Colonic mucosa (tissue), 4 donors: ENCODE measurements at regions of chr20 and their contacts with region 1.

Region 1: GRCh38 chr20:47620808-47621805 is 119.4 kb downstream of the NCOA3 start:
- DNase-seq: no peak
- H3K4me3 ChIP-seq: no peak overlapping the region
- H3K27ac ChIP-seq: no peak overlapping the region
- H3K4me1 ChIP-seq: no peaks in the 10 kb centered on the region
- H3K27me3 ChIP-seq: no peaks in the 10 kb centered on the region
- CTCF ChIP-seq: peak; percentile 86

Region 2: DNA sequence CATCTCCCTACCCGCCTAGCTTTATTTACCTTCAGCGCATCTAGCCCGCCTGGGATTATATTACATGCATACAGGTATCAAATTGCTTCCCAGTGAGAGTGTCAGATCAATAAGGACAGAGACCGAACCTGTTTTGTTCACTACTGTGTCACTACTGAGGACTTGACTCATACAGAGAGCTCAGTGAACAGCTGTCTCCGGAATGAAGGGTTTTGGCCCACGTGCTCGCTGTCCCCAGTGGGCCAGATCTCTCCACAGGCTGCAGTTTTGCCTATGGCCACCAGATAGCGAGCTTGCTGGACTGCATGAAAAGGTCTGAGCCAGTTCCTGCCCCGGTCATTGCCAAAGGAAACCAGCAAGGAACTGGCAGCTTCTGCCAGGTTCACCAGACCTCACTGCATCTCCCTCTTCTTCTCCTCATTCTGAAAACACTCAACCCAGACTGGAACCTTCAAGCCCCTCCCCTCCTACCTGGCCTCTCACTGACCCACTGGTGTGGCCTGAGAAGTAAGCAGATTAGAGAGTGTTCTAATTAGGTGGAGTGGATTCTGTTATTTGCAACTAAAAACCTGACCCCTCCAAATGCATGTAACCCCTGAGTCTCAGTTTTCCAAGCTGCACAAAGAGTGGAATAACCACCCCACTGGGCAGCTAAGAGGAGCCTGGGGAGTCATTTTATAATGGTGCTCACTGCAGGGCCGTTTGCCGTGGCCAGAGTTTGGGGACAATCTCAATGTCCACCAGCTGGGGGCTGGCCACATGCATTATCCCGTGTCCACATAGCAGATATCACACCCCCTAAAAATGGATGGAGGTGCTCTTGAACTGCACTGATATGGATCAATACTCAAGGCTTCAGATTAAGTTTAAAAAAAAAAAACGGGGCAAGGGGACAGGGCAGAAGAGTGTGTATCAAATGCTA is 415.3 kb before region 1 on chr20:
- intact Hi-C with region 1: loop called (anchors 5 kb)
- DNase-seq: peak; percentile 27
- H3K4me3 ChIP-seq: no peak overlapping the region
- H3K27ac ChIP-seq: no peak overlapping the region
- H3K4me1 ChIP-seq: no peaks in the 10 kb centered on the region
- H3K27me3 ChIP-seq: no peaks in the 10 kb centered on the region
- CTCF ChIP-seq: peak; percentile 99

Region 3: DNA sequence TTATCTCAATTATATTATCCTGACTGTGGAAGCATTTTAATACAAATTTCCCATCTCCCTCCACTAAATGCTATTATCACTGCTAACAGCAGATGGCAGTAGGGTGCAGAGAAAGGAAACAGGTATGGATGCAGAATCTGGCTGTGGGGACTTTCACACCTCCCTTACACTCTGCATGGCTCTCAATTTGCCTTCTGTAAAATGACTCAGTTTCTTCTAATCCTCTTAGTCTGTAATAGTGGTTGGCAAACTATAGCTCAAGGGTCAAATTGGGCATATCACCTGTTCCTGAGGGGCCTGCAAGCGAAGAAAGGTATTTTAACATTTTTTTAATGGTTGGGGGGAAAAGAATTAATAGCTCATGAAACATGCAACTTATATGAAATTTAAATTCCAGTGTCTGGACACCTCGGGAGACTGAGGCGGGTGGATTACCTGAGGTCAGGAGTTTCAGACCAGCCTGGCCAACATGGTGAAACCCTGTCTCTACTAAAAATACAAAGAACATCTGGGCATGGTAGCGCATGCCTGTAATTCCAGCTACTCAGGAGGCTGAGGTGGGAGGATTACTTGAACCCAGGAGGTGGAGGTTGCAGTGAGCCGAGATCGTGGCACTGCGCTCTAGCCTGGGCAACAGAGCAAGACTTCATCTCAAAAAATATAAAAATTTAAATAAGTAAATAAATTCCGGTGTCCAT is 348.1 kb before region 1 on chr20:
- intact Hi-C with region 1: loop called (anchors 10 kb)
- DNase-seq: peak; percentile 66
- H3K4me3 ChIP-seq: no peak overlapping the region
- H3K27ac ChIP-seq: peak overlapping the region; percentile 54
- H3K4me1 ChIP-seq: no peaks in the 10 kb centered on the region
- H3K27me3 ChIP-seq: no peaks in the 10 kb centered on the region
- CTCF ChIP-seq: peak; percentile 83

Region 4: GRCh38 chr20:47379433-47380150 is 241.5 kb before region 1 on chr20:
- intact Hi-C with region 1: loop called (anchors 5 kb)
- DNase-seq: no peak
- H3K4me3 ChIP-seq: no peak overlapping the region
- H3K27ac ChIP-seq: no peak overlapping the region
- H3K4me1 ChIP-seq: no peaks in the 10 kb centered on the region
- H3K27me3 ChIP-seq: no peaks in the 10 kb centered on the region
- CTCF ChIP-seq: no peak

Region 5: GRCh38 chr20:47501483-47502270 is 119.4 kb before region 1 on chr20 and contains the start of gene NCOA3:
- intact Hi-C with region 1: loop called (anchors 10 kb)
- DNase-seq: peak; percentile 96
- H3K4me3 ChIP-seq: peak within 1 kb of the TSS; percentile 73
- H3K27ac ChIP-seq: peak within 1 kb of the TSS; percentile 81
- H3K4me1 ChIP-seq: no peaks in the 10 kb centered on the region
- H3K27me3 ChIP-seq: no peaks in the 10 kb centered on the region
- CTCF ChIP-seq: peak; percentile 47
- total RNA-seq, gene NCOA3: 17.1 to 24.2 TPM